Activated CD4-positive, alpha-beta T cell treated with anti-CD3 and anti-CD28 coated beads, Interleukin-2, amount 10 ng/mL, durations not matched to agents 24 days and 14 days (primary cell): ENCODE measurements at regions of chr14 and their contacts with region 1.

Region 1: DNA sequence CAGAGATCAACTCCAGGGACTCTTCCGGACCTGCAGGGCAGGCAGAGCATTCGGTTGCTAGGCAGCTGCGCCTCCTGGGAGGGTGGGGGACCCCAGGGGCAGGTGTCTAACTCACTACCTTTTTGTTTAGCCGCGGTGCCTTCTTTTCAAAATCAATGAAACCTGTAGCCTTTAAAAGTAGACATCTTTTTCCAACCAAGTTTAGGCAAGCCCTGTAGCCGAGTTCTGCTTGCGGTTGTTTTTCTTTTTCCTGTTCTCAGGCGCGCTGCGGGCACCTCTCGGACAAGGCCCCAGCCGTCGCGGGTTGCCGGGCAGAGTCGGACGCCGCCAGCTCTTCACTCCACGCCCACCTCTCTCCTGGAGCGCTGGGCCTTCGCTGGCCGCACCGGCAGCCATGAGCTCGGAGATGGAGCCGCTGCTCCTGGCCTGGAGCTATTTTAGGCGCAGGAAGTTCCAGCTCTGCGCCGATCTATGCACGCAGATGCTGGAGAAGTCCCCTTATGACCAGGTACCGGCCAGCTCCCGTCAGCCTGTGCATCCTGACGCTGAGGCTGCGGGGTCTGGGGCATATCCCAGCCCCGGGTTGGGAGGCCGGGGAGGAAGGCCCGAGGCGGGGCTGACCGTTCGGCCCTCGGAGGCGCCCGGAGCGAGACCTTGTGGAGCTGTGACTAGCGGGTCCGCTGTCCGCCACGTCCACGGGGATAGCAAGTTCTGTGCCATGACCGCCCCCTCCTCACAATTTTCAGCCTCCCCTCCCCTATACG is at the start of gene TTC8:
- DNase-seq: peak; percentile 94
- H3K4me3 Mint-ChIP-seq: peak within 1 kb of the TSS; percentile 84
- H3K27ac Mint-ChIP-seq: peak within 1 kb of the TSS; percentile 95
- H3K4me1 Mint-ChIP-seq: peaks cover 11% of the 10 kb centered on the region
- H3K27me3 Mint-ChIP-seq: peaks cover 32% of the 10 kb centered on the region
- total RNA-seq, gene TTC8: 3.4 and 4.2 TPM in 2 replicates

Region 2: GRCh38 chr14:88562831-88563686 is 261.4 kb before region 1 on chr14 and contains the start of gene ZC3H14:
- intact Hi-C with region 1: loop called (anchors 10 kb)
- DNase-seq: peak; percentile 97
- H3K4me3 Mint-ChIP-seq: peak within 1 kb of the TSS; percentile 94
- H3K27ac Mint-ChIP-seq: peak within 1 kb of the TSS; percentile 95
- H3K4me1 Mint-ChIP-seq: peaks cover 23% of the 10 kb centered on the region
- H3K27me3 Mint-ChIP-seq: peaks cover 27% of the 10 kb centered on the region
- total RNA-seq, gene ZC3H14: 59.2 and 64.7 TPM in 2 replicates

Region 3: GRCh38 chr14:88682495-88683114 is 141.9 kb before region 1 on chr14:
- intact Hi-C with region 1: no loop called
- DNase-seq: no peak
- H3K4me3 Mint-ChIP-seq: no peak overlapping the region
- H3K27ac Mint-ChIP-seq: no peak overlapping the region
- H3K4me1 Mint-ChIP-seq: no peaks in the 10 kb centered on the region
- H3K27me3 Mint-ChIP-seq: no peaks in the 10 kb centered on the region

Region 4: GRCh38 chr14:88775513-88775927 is 49.0 kb before region 1 on chr14:
- intact Hi-C with region 1: no loop called
- DNase-seq: no peak
- H3K4me3 Mint-ChIP-seq: no peak overlapping the region
- H3K27ac Mint-ChIP-seq: no peak overlapping the region
- H3K4me1 Mint-ChIP-seq: no peaks in the 10 kb centered on the region
- H3K27me3 Mint-ChIP-seq: no peaks in the 10 kb centered on the region

Region 5: DNA sequence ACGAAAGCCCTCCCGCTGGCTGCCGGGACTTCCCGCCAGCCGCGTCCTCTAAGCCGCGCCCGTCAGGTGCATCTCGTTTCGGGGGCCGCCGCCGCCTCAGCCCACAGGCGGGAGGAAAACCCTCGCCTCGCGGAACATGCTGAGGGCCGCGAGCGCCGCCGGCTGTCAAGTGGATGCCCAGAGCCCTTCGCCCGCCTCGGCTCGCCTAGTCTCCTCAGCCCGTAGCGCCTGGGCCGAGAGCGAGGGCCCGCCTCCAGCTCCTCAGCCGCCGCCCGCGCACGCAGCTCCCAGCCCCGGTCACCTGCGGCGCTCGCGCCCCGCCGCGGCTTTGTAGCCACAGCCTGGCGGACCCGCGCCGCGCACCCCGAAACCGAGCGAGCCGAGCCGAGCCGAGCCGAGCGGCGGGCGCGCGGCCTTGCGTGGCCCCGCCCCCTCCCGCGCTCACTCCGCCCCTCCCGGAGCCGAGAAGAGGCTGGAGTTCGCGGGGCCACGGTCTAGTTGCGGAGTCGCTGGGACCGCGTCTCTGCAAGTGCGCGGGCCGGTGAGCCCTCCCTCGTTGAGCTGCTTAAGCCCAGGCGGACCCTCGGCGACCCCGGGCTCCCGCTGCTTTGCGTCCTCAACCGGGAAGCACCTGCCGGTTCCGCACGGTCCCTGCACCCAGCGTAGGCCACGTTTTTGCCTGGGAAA is 31.8 kb before region 1 on chr14 and contains the start of gene EML5:
- intact Hi-C with region 1: loop called (anchors 1 kb)
- DNase-seq: peak; percentile 95
- H3K4me3 Mint-ChIP-seq: peak within 1 kb of the TSS; percentile 83
- H3K27ac Mint-ChIP-seq: peak within 1 kb of the TSS; percentile 15
- H3K4me1 Mint-ChIP-seq: peaks cover 7% of the 10 kb centered on the region
- H3K27me3 Mint-ChIP-seq: peaks cover 37% of the 10 kb centered on the region
- total RNA-seq, gene EML5: 0.66 and 0.82 TPM in 2 replicates

Region 6: GRCh38 chr14:90256354-90257131 is 1432.0 kb after region 1 on chr14 and contains the start of gene PSMC1:
- intact Hi-C with region 1: loop called (anchors 10 kb)
- DNase-seq: peak; percentile 96
- H3K4me3 Mint-ChIP-seq: peak within 1 kb of the TSS; percentile 93
- H3K27ac Mint-ChIP-seq: peak within 1 kb of the TSS; percentile 96
- H3K4me1 Mint-ChIP-seq: peaks cover 27% of the 10 kb centered on the region
- H3K27me3 Mint-ChIP-seq: peaks cover 4% of the 10 kb centered on the region
- total RNA-seq, gene PSMC1: 170 and 185 TPM in 2 replicates

Region 7: GRCh38 chr14:90331497-90332435 is 1507.3 kb after region 1 on chr14 and contains the start of gene NRDE2:
- intact Hi-C with region 1: loop called (anchors 5 kb)
- DNase-seq: peak; percentile 98
- H3K4me3 Mint-ChIP-seq: peak within 1 kb of the TSS; percentile 95
- H3K27ac Mint-ChIP-seq: peak within 1 kb of the TSS; percentile 93
- H3K4me1 Mint-ChIP-seq: peaks cover 18% of the 10 kb centered on the region
- H3K27me3 Mint-ChIP-seq: peaks cover 25% of the 10 kb centered on the region
- total RNA-seq, gene NRDE2: 22.1 and 22.8 TPM in 2 replicates